ENCODE measurements at regions of chr4 and their contacts with region 1.

Region 1: GRCh38 chr4:61239250-61239649 is 39.1 kb downstream of the ADGRL3 start:
- DNase-seq: no peak
- H3K4me3 ChIP-seq: no peak overlapping the region
- H3K27ac ChIP-seq: no peak overlapping the region
- H3K4me1 ChIP-seq: no peaks in the 10 kb centered on the region
- H3K27me3 ChIP-seq: no peaks in the 10 kb centered on the region
- CTCF ChIP-seq: no peak

Region 2: DNA sequence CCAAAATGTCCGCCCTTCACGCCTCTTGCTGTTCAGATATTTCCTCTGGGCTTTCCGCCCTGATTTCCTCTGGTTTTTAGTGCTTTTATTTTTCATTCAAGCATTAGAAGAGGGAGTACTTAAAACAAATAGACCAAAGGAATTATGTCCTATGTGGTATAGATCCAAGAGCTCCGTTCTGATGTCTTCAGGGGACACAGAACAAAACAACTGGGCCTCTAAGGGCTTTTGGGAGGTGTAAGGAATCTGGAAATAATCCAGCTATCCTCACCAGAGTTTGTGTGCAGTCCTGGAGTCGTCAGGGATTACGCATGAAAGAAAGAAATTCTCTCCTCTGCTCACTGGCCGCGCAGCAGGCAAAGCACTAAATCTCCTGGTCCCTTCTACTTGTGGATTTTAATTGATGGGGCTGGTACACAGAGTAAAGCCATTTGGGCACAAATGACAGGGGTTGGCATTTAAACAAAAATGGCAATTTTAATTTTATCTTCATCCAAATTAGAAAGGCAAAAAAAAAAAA is 960.1 kb after region 1 on chr4:
- CTCF ChIA-PET with region 1: interaction called, 22 read pairs
- POLR2A ChIA-PET with region 1: no interaction called
- intact Hi-C with region 1: no loop called
- DNase-seq: no peak
- H3K4me3 ChIP-seq: no peak overlapping the region
- H3K27ac ChIP-seq: no peak overlapping the region
- H3K4me1 ChIP-seq: no peaks in the 10 kb centered on the region
- H3K27me3 ChIP-seq: no peaks in the 10 kb centered on the region
- CTCF ChIP-seq: no peak

Measured in PC-9 (cell line).